Dendritic cell treated with granulocyte-macrophage colony-stimulating factor and Interleukin-4, amounts not matched to agents 40 ng/mL and 50 ng/mL, for 4 days (primary cell): ENCODE measurements at regions of chr7 and their contacts with region 1.

Region 1: DNA sequence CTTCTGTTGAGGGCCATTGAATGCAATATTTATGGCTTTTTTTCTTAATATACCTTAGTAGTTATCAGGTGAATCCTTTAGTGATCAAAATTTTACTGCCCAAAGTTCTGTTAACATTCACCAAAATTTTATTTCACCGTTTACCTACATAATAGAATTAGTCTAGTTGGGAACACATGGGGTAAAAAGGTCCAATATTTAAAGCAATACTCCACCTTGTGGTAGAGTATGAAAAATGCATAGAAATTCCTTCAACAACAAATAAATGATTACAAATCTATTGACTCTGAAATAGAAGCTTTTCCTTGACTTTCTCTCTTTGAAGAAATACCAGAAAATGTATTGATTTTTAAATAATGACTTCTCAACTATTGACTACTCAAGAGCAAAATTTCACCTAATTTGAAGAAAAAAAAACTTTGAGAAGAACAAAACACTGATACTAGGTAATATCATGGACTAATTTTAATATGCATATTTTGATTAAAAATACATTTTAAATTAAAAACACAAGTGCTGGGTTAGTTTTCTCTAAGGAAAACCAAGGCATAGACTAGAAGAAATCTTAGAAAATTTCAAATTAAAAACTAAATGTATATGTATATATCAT is 43.3 kb downstream of the POLR1F start:
- H3K4me3 Mint-ChIP-seq: no peak overlapping the region
- H3K27ac Mint-ChIP-seq: no peak overlapping the region
- H3K4me1 Mint-ChIP-seq: no peaks in the 10 kb centered on the region
- H3K27me3 Mint-ChIP-seq: no peaks in the 10 kb centered on the region

Region 2: GRCh38 chr7:19121977-19122588 is 543.4 kb before region 1 on chr7:
- intact Hi-C with region 1: loop called (anchors 2 kb)
- H3K4me3 Mint-ChIP-seq: no peak overlapping the region
- H3K27ac Mint-ChIP-seq: no peak overlapping the region
- H3K4me1 Mint-ChIP-seq: peaks cover 6% of the 10 kb centered on the region
- H3K27me3 Mint-ChIP-seq: peaks cover 58% of the 10 kb centered on the region

Region 3: DNA sequence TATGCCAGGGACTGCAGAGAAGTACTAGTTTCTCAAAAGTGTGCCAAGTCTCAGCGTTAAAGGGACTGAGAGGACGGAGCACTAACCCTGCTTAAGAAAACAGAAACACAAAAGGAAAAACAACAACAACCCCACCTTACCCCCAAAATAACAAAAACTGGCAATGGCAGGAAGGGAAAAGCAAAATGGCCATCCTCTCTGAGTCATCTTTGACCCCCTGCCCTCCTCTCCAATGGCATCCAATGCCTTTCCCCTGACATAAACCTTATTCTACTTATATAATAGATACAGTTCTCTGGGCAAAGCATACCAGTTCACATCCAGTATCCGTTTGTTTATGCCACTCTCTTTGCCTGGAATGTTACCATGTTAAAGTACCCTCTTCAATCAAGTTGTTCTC is 41.7 kb after region 1 on chr7:
- intact Hi-C with region 1: no loop called
- H3K4me3 Mint-ChIP-seq: no peak overlapping the region
- H3K27ac Mint-ChIP-seq: no peak overlapping the region
- H3K4me1 Mint-ChIP-seq: peaks cover 35% of the 10 kb centered on the region
- H3K27me3 Mint-ChIP-seq: peaks cover 2% of the 10 kb centered on the region

Region 4: DNA sequence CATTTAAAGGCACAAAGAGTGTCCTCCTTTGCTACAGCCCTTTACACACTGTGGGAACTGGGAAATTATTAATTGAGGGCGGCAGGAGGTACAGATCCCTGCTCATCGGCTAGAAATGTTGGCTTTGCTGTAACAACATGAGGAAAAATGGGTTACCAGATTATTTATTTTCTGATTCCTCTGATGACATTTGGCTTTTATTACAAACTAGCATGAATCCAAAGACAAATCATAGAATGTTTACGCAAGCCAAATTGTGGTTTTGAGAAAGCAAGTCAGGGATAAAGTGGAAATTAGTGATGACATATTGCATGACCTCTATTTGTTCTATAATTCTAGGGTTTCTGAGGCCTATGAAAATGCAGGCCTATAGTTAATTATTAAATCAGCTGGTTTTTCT is 234.0 kb after region 1 on chr7:
- intact Hi-C with region 1: no loop called
- H3K4me3 Mint-ChIP-seq: no peak overlapping the region
- H3K27ac Mint-ChIP-seq: no peak overlapping the region
- H3K4me1 Mint-ChIP-seq: no peaks in the 10 kb centered on the region
- H3K27me3 Mint-ChIP-seq: no peaks in the 10 kb centered on the region